ENCODE measurements at regions of chr9 and their contacts with region 1.

Region 1: DNA sequence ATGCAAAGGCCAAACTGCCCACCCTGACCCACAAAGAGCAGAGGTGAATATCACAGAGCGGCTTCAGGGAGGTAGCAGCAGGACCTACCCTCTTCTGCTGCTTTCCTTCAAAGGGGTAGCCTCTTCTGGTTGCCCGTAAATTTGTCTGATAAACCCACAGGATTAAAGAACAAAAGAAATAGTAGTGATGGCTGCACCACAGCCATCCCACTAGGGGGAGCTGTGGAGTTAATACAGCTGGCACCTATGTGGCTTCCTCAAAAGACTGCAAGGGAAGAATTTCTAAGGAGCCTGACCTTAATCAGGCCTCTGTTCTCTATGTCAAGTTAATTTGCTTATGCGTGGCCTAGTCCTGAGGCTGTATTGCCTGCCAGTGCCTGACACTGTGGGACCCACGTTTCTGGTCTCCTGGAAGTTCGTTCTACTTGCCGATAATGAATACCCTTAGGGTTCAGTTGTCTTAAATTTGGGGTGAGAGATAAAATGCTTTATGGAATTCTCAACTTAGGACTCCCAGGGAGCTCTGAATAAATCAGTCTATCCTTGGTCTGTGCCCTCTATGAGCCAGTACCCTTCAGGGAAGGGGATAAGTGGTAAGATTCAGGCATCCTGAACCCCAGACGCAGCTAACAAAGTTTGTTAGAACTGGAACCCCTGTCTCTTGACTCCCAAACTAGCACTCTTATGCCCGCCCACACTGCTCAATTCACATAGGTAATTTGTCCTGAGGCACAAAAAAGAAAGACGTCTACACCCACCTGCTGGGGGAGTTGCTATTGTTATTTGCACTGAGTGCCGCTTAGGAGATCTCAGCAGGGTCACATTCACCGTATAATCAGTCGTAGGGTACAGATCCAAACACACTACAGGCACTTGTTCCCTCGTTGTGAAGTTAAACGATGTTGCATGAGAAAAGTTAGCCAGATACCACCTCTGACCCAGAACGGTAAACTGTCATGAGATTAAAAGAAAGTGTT is 77.1 kb downstream of the SUSD1 start:
- DNase-seq: peak; percentile 81 to 88
- H3K4me3 ChIP-seq: no peak overlapping the region
- H3K4me1 ChIP-seq: peaks cover 4% of the 10 kb centered on the region
- H3K27me3 ChIP-seq: no peaks in the 10 kb centered on the region

Region 2: GRCh38 chr9:112844771-112845542 is 747.0 kb after region 1 on chr9:
- in situ Hi-C with region 1: loop called (anchors 25 kb)
- DNase-seq: peak; percentile 65 to 87
- H3K4me3 ChIP-seq: no peak overlapping the region
- H3K4me1 ChIP-seq: no peaks in the 10 kb centered on the region
- H3K27me3 ChIP-seq: no peaks in the 10 kb centered on the region

Measured in HAP-1 (cell line).